ENCODE measurements at regions of chr2 and their contacts with region 1.

Region 1: GRCh38 chr2:215920244-215921100 is 92.9 kb downstream of the MREG start:
- DNase-seq: peak; percentile 84
- ATAC-seq: peak; percentile 82
- H3K4me3 ChIP-seq: no peak overlapping the region
- H3K27ac ChIP-seq: no peak overlapping the region
- H3K4me1 ChIP-seq: peaks cover 35% of the 10 kb centered on the region
- H3K27me3 ChIP-seq: no peaks in the 10 kb centered on the region
- CTCF ChIP-seq: peak; percentile 94

Region 2: DNA sequence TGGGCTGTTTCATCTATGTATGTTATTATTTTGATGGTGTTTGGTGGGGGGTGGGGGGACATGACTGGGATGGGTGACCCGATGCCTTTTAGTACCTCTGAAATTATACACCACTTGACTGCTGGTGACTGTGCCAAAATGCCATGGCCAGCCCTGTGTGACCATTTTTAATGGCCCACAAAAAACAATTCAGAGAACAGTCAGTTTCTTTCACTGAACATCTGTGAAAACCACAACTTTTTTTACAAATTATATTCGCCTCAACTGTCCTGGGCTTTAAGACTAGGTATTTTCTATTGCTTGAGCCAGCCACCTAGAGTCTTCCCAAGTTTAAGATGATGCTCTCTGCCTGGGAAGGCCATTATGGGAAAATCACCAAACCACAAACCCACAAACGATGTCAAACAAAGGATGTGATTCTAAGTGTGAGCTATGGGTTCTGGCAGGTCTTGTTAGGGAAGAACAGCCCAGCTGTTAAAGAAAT is 518.5 kb before region 1 on chr2:
- CTCF ChIA-PET with region 1: interaction called, 14 read pairs
- POLR2A ChIA-PET with region 1: no interaction called
- intact Hi-C with region 1: no loop called
- DNase-seq: peak; percentile 78
- ATAC-seq: peak; percentile 94
- H3K4me3 ChIP-seq: no peak overlapping the region
- H3K27ac ChIP-seq: peak overlapping the region; percentile 36
- H3K4me1 ChIP-seq: peaks cover 12% of the 10 kb centered on the region
- H3K27me3 ChIP-seq: no peaks in the 10 kb centered on the region
- CTCF ChIP-seq: no peak

Region 3: GRCh38 chr2:215435809-215436704 is 484.4 kb before region 1 on chr2 and contains the start of gene FN1:
- CTCF ChIA-PET with region 1: no interaction called
- POLR2A ChIA-PET with region 1: no interaction called
- intact Hi-C with region 1: loop called (anchors 5 kb)
- DNase-seq: peak; percentile 82
- ATAC-seq: peak; percentile 59
- H3K4me3 ChIP-seq: peak within 1 kb of the TSS; percentile 97
- H3K27ac ChIP-seq: peak within 1 kb of the TSS; percentile 82
- H3K4me1 ChIP-seq: peaks cover 38% of the 10 kb centered on the region
- H3K27me3 ChIP-seq: no peaks in the 10 kb centered on the region
- CTCF ChIP-seq: no peak
- total RNA-seq, gene FN1: 220 and 248 TPM in 2 replicates

Region 4: DNA sequence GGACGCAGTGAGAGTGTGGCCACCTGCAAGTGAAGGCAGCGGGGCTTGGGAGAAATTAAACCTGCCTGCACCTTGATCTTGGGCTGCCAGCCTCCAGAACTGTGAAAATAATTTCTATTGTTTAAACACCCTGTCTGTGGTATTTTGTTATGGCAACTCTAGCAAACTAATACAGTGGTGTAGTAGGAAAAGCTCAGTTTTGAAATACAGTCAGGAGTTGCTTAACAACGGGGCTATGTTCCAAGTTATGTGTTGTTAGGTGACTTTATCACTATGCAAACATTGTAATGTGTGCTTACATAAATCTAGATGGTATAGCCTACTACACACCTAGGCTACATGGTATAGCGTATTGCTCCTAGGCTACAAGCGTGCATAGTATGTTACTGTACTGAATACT is 391.2 kb before region 1 on chr2:
- CTCF ChIA-PET with region 1: interaction called, 6 read pairs
- POLR2A ChIA-PET with region 1: no interaction called
- intact Hi-C with region 1: loop called (anchors 1 kb)
- DNase-seq: peak; percentile 97
- ATAC-seq: peak; percentile 82
- H3K4me3 ChIP-seq: peak overlapping the region; percentile 37
- H3K27ac ChIP-seq: peak overlapping the region; percentile 99
- H3K4me1 ChIP-seq: peaks cover 42% of the 10 kb centered on the region
- H3K27me3 ChIP-seq: no peaks in the 10 kb centered on the region
- CTCF ChIP-seq: no peak

Region 5: GRCh38 chr2:215828517-215829184 is 91.8 kb before region 1 on chr2:
- CTCF ChIA-PET with region 1: interaction called, 5 read pairs
- POLR2A ChIA-PET with region 1: no interaction called
- intact Hi-C with region 1: loop called (anchors 1 kb)
- DNase-seq: peak; percentile 86
- ATAC-seq: peak; percentile 82
- H3K4me3 ChIP-seq: no peak overlapping the region
- H3K27ac ChIP-seq: no peak overlapping the region
- H3K4me1 ChIP-seq: peaks cover 30% of the 10 kb centered on the region
- H3K27me3 ChIP-seq: no peaks in the 10 kb centered on the region
- CTCF ChIP-seq: peak; percentile 85